ENCODE measurements at regions of chr14 and their contacts with region 1.

Region 1: GRCh38 chr14:68548194-68549056 is 244.4 kb downstream of the ZFP36L1 start:
- DNase-seq: peak; percentile 96

Region 2: GRCh38 chr14:68663385-68664076 is 115.1 kb after region 1 on chr14:
- intact Hi-C with region 1: loop called in 1 of 2 experiments (anchors 10 kb)
- DNase-seq: no peak

Region 3: GRCh38 chr14:68779761-68780323 is 231.4 kb after region 1 on chr14:
- intact Hi-C with region 1: loop called in 1 of 2 experiments (anchors 5 kb)
- DNase-seq: peak; percentile 41

Region 4: GRCh38 chr14:68795597-68796417 is 247.4 kb after region 1 on chr14:
- intact Hi-C with region 1: loop called (anchors 5 to 10 kb)
- DNase-seq: peak; percentile 95

Region 5: GRCh38 chr14:69780952-69781351 is 1232.5 kb after region 1 on chr14:
- intact Hi-C with region 1: no loop called
- DNase-seq: no peak